A549 (cell line): ENCODE measurements at regions of chr1 and their contacts with region 1.

Region 1: DNA sequence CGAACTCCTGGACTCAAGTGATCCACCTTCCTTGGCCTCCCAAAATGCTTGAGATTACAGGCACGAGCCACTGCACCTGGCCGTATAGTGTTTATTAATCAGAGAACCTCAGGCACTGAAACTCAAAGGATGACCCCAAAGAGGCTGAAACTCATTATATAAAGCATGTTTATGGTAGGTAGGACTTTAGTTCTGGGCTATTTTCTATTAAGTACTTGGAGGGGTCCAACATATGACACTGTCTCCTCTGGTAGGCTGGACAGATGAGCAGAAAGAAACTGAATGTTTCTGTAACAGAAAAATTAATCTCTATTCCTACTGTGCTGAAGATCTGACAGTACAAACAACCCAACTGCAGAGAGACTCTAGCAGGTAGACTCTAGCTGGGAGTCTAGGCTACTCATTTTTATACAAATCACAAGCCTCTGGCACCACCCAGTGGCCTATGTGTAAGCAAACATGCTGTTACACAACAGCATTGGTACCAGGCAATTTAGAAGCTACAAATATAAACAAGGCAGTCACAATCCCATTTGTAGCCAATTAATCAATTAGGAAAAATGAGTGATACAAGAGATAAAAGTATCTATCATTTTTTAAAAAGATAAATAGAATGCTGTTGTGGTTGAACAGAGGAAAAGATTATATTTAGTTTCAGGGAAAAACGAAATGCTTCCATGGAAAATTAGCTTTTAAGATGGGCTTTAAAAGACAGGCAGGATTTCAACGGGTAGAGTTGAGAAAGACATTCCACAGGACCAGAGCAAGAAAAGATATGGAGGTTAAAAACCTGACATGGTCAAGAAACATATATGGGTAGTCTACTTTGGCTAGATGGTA is 10.4 kb downstream of the DCAF8 start:
- DNase-seq: peak; percentile 70 to 73
- ATAC-seq: peak; percentile 98 to 99
- H3K4me3 ChIP-seq: no peak overlapping the region
- H3K27ac ChIP-seq: no peak overlapping the region
- H3K4me1 ChIP-seq: peaks cover 16% of the 10 kb centered on the region
- CTCF ChIP-seq: peak; percentile 77
- EP300 ChIP-seq: no peak
- POLR2A ChIP-seq: no peak
- RAD21 ChIP-seq: peak; percentile 83 to 85

Region 2: GRCh38 chr1:160046494-160047110 is 205.3 kb before region 1 on chr1:
- CTCF ChIA-PET with region 1: interaction called, 12 read pairs
- POLR2A ChIA-PET with region 1: no interaction called
- DNase-seq: peak; percentile 26 to 75
- ATAC-seq: peak; percentile 73 to 91
- H3K4me3 ChIP-seq: 0 out of 3 replicates have a peak overlapping the region, but pooled peaks have one; percentile 17
- H3K27ac ChIP-seq: no peak overlapping the region
- H3K4me1 ChIP-seq: peaks cover 8% of the 10 kb centered on the region; the same call in 2 of the 3 replicates
- CTCF ChIP-seq: peak; percentile 72
- EP300 ChIP-seq: no peak
- POLR2A ChIP-seq: no peak
- RAD21 ChIP-seq: peak; percentile 67 to 71

Region 3: GRCh38 chr1:160144921-160145320 is 107.0 kb before region 1 on chr1:
- CTCF ChIA-PET with region 1: no interaction called
- POLR2A ChIA-PET with region 1: no interaction called
- DNase-seq: no peak
- ATAC-seq: no peak
- H3K4me3 ChIP-seq: no peak overlapping the region
- H3K27ac ChIP-seq: no peak overlapping the region
- H3K4me1 ChIP-seq: peaks cover 9% of the 10 kb centered on the region; the same call in 2 of the 3 replicates
- CTCF ChIP-seq: no peak
- EP300 ChIP-seq: no peak
- POLR2A ChIP-seq: no peak
- RAD21 ChIP-seq: no peak

Region 4: DNA sequence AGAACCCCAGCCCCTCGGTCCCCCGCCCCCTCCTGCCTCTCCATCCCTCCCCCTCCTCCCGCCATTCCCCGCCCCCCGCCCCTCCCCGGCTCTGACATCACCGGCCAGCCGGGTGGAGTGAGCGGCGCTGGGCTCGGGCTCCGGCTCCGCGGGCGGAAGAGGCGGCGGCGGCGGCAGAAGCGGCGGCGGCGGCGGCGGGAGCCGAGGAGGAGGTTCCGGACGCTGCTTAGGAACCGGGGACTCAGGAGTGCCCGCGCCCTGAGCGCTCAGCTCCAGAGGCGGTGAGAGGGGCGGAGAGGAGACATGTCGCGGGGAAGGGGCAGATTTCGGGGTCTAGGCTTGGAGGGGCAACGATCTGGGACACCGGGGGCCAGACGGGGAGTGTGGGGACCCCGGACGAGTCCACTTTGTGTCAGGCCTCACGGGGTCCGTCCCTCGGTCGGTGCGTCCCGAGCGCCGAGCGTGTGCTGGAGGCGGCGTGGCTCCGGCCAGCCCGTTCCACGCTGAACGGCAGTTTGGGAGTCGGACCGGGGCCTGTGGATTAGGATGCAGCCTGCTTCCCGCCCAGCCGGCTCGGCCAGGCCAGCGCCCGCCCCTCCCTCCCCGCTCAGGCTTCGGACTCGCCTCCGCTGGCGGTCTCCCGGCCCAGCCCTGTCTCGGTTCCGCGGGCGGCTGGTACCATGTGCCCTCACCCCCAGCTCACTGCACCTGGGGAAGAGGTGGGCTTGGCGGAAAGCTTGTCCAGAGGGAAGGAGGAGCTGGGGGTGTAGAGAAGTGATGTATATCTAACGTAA is 46.5 kb before region 1 on chr1 and contains the start of gene PEA15:
- CTCF ChIA-PET with region 1: interaction called, 27 read pairs
- POLR2A ChIA-PET with region 1: no interaction called
- DNase-seq: peak; percentile 60 to 87
- ATAC-seq: peak; percentile 72 to 81
- H3K4me3 ChIP-seq: peak within 1 kb of the TSS; percentile 88
- H3K27ac ChIP-seq: peak within 1 kb of the TSS; percentile 89 to 96
- H3K4me1 ChIP-seq: peaks cover 45% of the 10 kb centered on the region
- CTCF ChIP-seq: no peak
- EP300 ChIP-seq: no peak
- POLR2A ChIP-seq: peak; percentile 20; the same call in 1 of the 2 replicates
- RAD21 ChIP-seq: no peak
- polyA plus RNA-seq, gene PEA15: 115 and 130 TPM in 2 replicates

Region 5: GRCh38 chr1:160226623-160227022 is 25.3 kb before region 1 on chr1:
- CTCF ChIA-PET with region 1: interaction called, 26 read pairs
- POLR2A ChIA-PET with region 1: no interaction called
- DNase-seq: no peak
- ATAC-seq: no peak
- H3K4me3 ChIP-seq: no peak overlapping the region
- H3K27ac ChIP-seq: no peak overlapping the region
- H3K4me1 ChIP-seq: no peaks in the 10 kb centered on the region
- CTCF ChIP-seq: no peak
- EP300 ChIP-seq: no peak
- POLR2A ChIP-seq: no peak
- RAD21 ChIP-seq: no peak

Region 6: DNA sequence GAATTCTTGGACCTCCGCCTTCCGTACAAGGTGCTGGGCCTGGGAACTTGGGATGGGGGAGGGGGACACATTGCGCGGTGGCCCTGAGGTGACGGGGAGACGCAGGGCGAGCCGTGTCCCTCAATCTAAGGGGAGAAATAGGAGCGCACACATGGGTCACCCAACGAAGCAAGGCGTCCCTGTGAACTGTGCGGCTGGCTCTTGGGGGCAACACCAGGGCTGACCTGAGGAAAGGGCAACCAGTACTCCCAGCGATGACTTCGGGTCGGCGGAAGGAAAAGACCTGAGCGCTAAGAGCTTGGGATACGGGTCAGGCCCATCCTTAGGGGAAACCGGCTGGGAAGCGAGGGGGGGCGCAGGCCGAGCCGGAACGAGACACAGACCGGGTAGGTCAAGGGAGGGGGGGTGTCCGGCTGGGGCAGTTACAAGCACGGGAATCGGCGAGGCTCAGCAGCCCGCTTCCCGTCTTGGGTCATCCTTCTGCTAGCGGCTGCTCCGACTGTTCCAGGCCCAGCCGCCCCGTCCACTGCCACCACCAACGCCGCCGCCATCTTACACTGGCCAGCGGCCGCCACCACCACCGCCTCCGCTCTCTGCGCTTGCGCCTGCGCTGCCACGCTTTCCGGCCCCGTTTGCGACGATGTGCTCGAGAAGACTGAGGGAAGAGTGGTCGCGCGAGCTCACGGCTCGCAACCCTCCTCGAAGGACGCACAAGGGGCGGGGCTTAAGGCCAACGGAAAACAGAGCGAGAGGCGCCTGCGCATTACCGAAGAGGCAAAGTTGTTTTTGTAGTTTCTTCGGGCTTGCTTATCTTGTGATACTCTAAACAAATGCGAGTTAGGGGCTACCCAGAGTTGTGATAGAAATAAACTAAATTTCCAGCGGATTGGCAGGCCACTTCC is 10.2 kb after region 1 on chr1 and contains the start of gene DCAF8:
- CTCF ChIA-PET with region 1: interaction called, 63 read pairs
- POLR2A ChIA-PET with region 1: interaction called, 22 read pairs
- DNase-seq: peak; percentile 89 to 98
- ATAC-seq: peak; percentile 95 to 96
- H3K4me3 ChIP-seq: peak within 1 kb of the TSS; percentile 83
- H3K27ac ChIP-seq: peak within 1 kb of the TSS; percentile 96 to 99
- H3K4me1 ChIP-seq: peaks cover 36% of the 10 kb centered on the region
- CTCF ChIP-seq: no peak
- EP300 ChIP-seq: no peak
- POLR2A ChIP-seq: peak; percentile 97
- RAD21 ChIP-seq: no peak
- polyA plus RNA-seq, gene DCAF8: 103 and 113 TPM in 2 replicates

Region 7: DNA sequence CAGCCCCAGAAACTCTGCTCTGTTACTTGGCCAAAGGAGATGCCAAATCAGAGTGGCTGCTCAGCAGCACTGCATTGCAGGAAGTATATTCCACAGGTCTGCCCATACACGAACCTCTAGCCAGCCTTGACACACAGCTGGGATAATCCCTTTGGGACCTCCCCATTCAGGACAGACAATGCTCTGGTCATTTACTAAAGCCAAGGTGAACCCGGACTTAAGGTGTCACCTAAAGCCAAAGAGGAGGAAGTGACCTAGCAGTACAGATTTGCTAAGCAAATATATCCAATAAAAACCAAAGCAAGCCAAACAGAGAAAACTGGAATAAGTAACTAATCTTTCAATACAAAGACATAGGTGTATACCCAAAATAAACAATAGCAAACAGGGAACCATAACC is 63.5 kb after region 1 on chr1:
- CTCF ChIA-PET with region 1: no interaction called
- POLR2A ChIA-PET with region 1: no interaction called
- DNase-seq: no peak
- ATAC-seq: no peak
- H3K4me3 ChIP-seq: no peak overlapping the region
- H3K27ac ChIP-seq: no peak overlapping the region
- H3K4me1 ChIP-seq: no peaks in the 10 kb centered on the region
- CTCF ChIP-seq: no peak
- EP300 ChIP-seq: no peak
- POLR2A ChIP-seq: no peak
- RAD21 ChIP-seq: no peak